Colonic mucosa (tissue), 4 donors: ENCODE measurements at regions of chr1 and their contacts with region 1.

Region 1: GRCh38 chr1:42816585-42817434 is at the starts of genes ERMAP and SVBP:
- DNase-seq: peak; percentile 95
- H3K4me3 ChIP-seq: peak within 1 kb of the TSS; percentile 54
- H3K27ac ChIP-seq: peak within 1 kb of the TSS; percentile 96
- H3K4me1 ChIP-seq: peaks cover 4% of the 10 kb centered on the region
- H3K27me3 ChIP-seq: no peaks in the 10 kb centered on the region
- CTCF ChIP-seq: no peak
- total RNA-seq, gene ERMAP: 9.0 to 13.3 TPM
- total RNA-seq, gene SVBP: 14.0 to 22.9 TPM

Region 2: GRCh38 chr1:42567043-42567442 is 249.8 kb before region 1 on chr1:
- intact Hi-C with region 1: no loop called
- DNase-seq: no peak
- H3K4me3 ChIP-seq: no peak overlapping the region
- H3K27ac ChIP-seq: no peak overlapping the region
- H3K4me1 ChIP-seq: no peaks in the 10 kb centered on the region
- H3K27me3 ChIP-seq: no peaks in the 10 kb centered on the region
- CTCF ChIP-seq: no peak

Region 3: GRCh38 chr1:42766741-42767509 is 49.9 kb before region 1 on chr1 and contains the starts of genes C1orf50 and P3H1:
- intact Hi-C with region 1: loop called (anchors 5 kb)
- DNase-seq: peak; percentile 100
- H3K4me3 ChIP-seq: peak within 1 kb of the TSS; percentile 99
- H3K27ac ChIP-seq: peak within 1 kb of the TSS; percentile 84
- H3K4me1 ChIP-seq: no peaks in the 10 kb centered on the region
- H3K27me3 ChIP-seq: no peaks in the 10 kb centered on the region
- CTCF ChIP-seq: no peak
- total RNA-seq, gene C1orf50: 3.4 to 5.8 TPM
- total RNA-seq, gene P3H1: 11.7 to 19.1 TPM